Calu3 (cell line): ENCODE measurements at regions of chr1 and their contacts with region 1.

Region 1: GRCh38 chr1:13799502-13800267 is 99.7 kb downstream of the PRDM2 start:
- DNase-seq: no peak
- H3K4me3 Mint-ChIP-seq: peak overlapping the region; percentile 21
- H3K27ac Mint-ChIP-seq: no peak overlapping the region
- H3K4me1 Mint-ChIP-seq: peaks cover 10% of the 10 kb centered on the region
- H3K27me3 Mint-ChIP-seq: no peaks in the 10 kb centered on the region
- CTCF ChIP-seq: no peak

Region 2: DNA sequence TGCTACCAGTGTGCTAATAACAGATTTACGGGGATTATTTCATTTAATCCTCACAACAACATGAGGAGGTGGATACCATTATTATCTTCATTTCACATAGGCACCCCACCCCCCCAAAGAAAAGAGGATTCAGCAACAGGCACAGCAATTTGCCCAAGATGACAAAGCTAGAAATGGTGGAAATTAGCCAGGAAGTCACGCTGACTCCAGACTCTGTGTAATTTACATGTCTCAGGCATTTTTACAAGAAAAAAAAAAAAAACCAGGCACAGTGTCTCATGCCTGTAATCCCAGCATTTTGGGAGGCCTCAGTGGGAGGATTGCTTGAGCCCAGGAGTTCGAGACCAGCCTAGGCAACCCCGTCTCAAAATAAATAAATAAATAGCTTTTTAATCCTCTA is 137.2 kb before region 1 on chr1:
- CTCF ChIA-PET with region 1: no interaction called
- intact Hi-C with region 1: no loop called
- DNase-seq: no peak
- H3K4me3 Mint-ChIP-seq: no peak overlapping the region
- H3K27ac Mint-ChIP-seq: no peak overlapping the region
- H3K4me1 Mint-ChIP-seq: no peaks in the 10 kb centered on the region
- H3K27me3 Mint-ChIP-seq: no peaks in the 10 kb centered on the region
- CTCF ChIP-seq: no peak

Region 3: DNA sequence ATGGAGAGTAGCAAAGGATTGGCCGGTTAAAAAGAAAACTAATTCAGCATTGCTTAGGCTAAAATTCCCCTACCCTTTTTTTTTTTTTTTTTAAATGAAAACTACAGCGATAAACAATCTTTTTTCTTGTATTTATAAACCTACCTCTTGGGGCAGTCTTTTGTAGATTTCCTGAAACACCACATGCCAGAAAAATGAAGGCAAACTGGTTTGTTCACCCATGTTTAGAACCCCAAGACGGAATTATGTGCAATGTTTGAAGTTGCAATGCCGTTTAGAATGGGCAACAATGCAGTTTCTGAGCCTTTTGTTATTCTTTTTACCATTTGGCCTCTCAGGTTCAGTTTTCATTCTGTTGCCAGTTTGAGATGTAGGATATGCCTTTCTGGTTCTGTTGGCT is 40.6 kb before region 1 on chr1:
- CTCF ChIA-PET with region 1: no interaction called
- intact Hi-C with region 1: loop called (anchors 2 kb)
- DNase-seq: peak; percentile 41
- H3K4me3 Mint-ChIP-seq: peak overlapping the region; percentile 55
- H3K27ac Mint-ChIP-seq: peak overlapping the region; percentile 85
- H3K4me1 Mint-ChIP-seq: peaks cover 8% of the 10 kb centered on the region
- H3K27me3 Mint-ChIP-seq: no peaks in the 10 kb centered on the region
- CTCF ChIP-seq: no peak

Region 4: GRCh38 chr1:14765773-14766172 is 966.1 kb after region 1 on chr1:
- CTCF ChIA-PET with region 1: no interaction called
- intact Hi-C with region 1: no loop called
- DNase-seq: peak; percentile 42
- H3K4me3 Mint-ChIP-seq: no peak overlapping the region
- H3K27ac Mint-ChIP-seq: no peak overlapping the region
- H3K4me1 Mint-ChIP-seq: peaks cover 15% of the 10 kb centered on the region
- H3K27me3 Mint-ChIP-seq: peaks cover 12% of the 10 kb centered on the region
- CTCF ChIP-seq: no peak